ENCODE measurements at regions of chr14 and their contacts with region 1.

Region 1: DNA sequence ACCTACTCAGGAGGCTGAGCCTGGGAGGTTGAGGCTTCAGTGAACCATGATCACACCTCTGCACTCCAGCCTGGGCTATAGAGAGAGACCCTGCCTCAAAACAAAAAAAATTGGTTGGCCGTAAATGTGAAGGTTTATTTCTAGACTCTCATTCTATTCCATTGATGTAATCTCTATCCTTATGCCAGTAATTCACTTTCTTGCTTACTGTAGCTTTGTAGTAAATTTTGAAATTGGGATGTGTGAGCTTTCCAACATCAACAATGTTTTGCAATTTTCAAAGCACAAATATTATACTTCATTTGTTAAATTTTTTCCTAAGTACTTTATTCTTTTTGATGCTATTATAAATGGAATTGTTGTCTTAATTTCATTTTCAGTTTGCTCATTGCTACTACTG is 24.6 kb downstream of the LIN52 start:
- DNase-seq: no peak
- ATAC-seq: no peak
- H3K4me3 ChIP-seq: no peak overlapping the region
- H3K27ac ChIP-seq: no peak overlapping the region
- H3K4me1 ChIP-seq: no peaks in the 10 kb centered on the region
- H3K27me3 ChIP-seq: no peaks in the 10 kb centered on the region

Region 2: GRCh38 chr14:74223016-74223415 is 113.6 kb after region 1 on chr14:
- intact Hi-C with region 1: no loop called
- DNase-seq: no peak
- ATAC-seq: no peak
- H3K4me3 ChIP-seq: no peak overlapping the region
- H3K27ac ChIP-seq: no peak overlapping the region
- H3K4me1 ChIP-seq: no peaks in the 10 kb centered on the region
- H3K27me3 ChIP-seq: no peaks in the 10 kb centered on the region

Region 3: DNA sequence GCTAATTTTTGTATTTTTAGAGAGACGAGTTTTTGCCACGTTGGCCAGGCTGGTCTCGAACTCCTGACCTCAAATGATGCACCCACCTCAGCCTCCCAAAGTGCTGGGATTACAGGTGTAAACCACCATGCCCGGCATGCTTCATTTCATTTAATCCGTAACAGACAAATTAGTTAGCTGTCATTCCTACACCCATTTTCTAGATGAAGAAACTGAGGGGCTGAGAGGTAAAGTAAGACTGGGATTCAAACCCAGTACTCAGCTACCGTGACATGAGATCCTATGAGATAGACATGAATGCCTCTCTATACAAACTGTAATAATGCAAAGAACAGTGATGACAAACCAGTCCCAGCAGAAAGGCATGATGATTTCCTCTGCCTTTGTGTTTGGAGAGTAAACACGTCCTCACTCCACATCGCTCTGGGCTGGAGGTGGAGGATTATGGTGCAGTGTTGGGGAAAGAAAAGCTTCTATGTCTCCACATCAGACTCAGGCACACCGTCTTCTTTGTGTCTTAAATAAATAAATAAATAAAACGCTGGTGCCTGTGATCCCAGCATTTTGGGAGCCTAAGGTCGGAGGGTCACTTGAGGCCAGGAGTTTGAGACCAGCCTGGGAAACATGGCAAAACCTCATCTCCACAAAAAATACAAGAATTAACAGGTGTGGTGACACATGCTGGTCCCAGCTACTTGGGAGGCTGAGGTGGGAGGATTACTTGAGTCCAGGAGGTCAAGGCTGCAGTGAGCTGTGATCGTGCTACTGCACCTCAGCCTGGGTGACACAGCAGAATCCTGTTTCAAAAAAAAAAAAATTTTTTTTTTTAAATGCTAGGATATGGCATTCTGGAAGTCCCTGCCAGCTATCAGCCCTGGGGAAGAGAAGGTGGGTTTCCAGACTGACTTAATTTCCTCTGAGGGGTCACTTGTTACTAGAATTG is 140.3 kb after region 1 on chr14:
- intact Hi-C with region 1: loop called in 3 of 4 experiments (anchors 5 kb)
- DNase-seq: no peak
- ATAC-seq: no peak
- H3K4me3 ChIP-seq: no peak overlapping the region
- H3K27ac ChIP-seq: no peak overlapping the region
- H3K4me1 ChIP-seq: no peaks in the 10 kb centered on the region
- H3K27me3 ChIP-seq: no peaks in the 10 kb centered on the region

Region 4: GRCh38 chr14:74257078-74257989 is 148.0 kb after region 1 on chr14:
- intact Hi-C with region 1: loop called (anchors 2 to 5 kb)
- DNase-seq: peak; percentile 37 to 76 (median 73)
- ATAC-seq: peak; percentile 86
- H3K4me3 ChIP-seq: peak overlapping the region; percentile 94
- H3K27ac ChIP-seq: no peak overlapping the region
- H3K4me1 ChIP-seq: peaks cover 3% of the 10 kb centered on the region
- H3K27me3 ChIP-seq: no peaks in the 10 kb centered on the region

Measured in right cardiac atrium (tissue), 5 donors.